HepG2 (cell line): ENCODE measurements at regions of chr19 and their contacts with region 1.

Region 1: GRCh38 chr19:18388100-18388959 is 2.4 kb downstream of the GDF15 start:
- DNase-seq: peak; percentile 52
- ATAC-seq: peak; percentile 21
- H3K4me3 ChIP-seq: peak overlapping the region; percentile 86 to 95 (median 91); a peak in 5 of 6 replicates
- H3K27ac ChIP-seq: peak overlapping the region; percentile 80
- H3K4me1 ChIP-seq: peaks cover 39% of the 10 kb centered on the region
- H3K27me3 ChIP-seq: no peaks in the 10 kb centered on the region; a peak in 1 of 5 replicates
- CTCF ChIP-seq: peak; percentile 95
- EP300 ChIP-seq: peak in 1 of 2 experiments; percentile 11; a peak in 1 of 4 replicates
- POLR2A ChIP-seq: peak; percentile 36 to 53
- RAD21 ChIP-seq: peak; percentile 90

Region 2: DNA sequence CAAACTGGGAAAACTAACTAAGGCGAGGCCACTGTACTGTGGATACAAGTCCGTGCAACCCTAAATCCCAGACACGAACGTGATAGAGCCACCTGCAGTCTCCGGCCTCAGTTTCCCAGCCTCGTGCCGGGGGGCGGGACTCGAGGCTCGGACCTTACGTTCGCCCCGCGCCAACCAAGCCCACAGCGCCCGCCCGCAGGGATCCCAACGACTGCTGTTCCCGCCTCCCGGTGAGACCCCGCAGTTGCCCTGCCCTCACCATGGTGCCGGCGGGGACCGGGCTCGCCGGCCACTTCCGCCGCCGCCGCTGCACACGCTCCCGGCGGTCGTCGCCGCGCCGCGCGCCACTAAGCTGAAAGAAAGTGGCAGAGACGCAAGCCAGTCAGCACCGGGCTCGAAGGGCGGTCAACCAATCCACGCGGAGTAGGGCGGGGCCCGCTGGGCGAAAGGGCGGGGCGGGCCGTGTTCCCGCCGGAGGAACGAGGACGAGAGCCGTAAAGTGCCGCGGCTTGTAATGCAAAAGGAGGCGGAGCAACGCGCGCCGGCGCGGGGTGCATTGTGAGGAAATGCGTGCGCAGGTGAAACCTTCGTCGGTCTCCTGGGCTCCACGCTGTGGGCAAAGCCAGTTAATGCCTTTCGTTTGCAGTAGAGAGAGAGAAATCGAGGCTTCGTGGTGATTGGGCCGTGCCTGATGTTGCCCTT is 65.4 kb before region 1 on chr19 and contains the start of gene LSM4:
- CTCF ChIA-PET with region 1: no interaction called
- POLR2A ChIA-PET with region 1: interaction called, 11 read pairs
- in situ Hi-C with region 1: no loop called
- intact Hi-C with region 1: no loop called
- DNase-seq: peak; percentile 95
- ATAC-seq: peak; percentile 88
- H3K4me3 ChIP-seq: peak within 1 kb of the TSS; percentile 69 to 80 (median 72)
- H3K27ac ChIP-seq: peak within 1 kb of the TSS; percentile 84
- H3K4me1 ChIP-seq: peaks cover 73% of the 10 kb centered on the region
- H3K27me3 ChIP-seq: no peaks in the 10 kb centered on the region
- CTCF ChIP-seq: peak; percentile 59
- EP300 ChIP-seq: no peak
- POLR2A ChIP-seq: peak; percentile 66 to 69
- RAD21 ChIP-seq: peak; percentile 51
- total RNA-seq, gene LSM4: 166 and 188 TPM in 2 replicates

Region 3: GRCh38 chr19:18340190-18340989 is 47.9 kb before region 1 on chr19 and contains the start of gene PGPEP1:
- CTCF ChIA-PET with region 1: no interaction called
- POLR2A ChIA-PET with region 1: interaction called, 28 read pairs
- in situ Hi-C with region 1: no loop called
- intact Hi-C with region 1: loop called (anchors 5 kb)
- DNase-seq: no peak
- ATAC-seq: peak; percentile 46
- H3K4me3 ChIP-seq: peak within 1 kb of the TSS; percentile 76 to 97 (median 89)
- H3K27ac ChIP-seq: peak within 1 kb of the TSS; percentile 88
- H3K4me1 ChIP-seq: peaks cover 67% of the 10 kb centered on the region
- H3K27me3 ChIP-seq: no peaks in the 10 kb centered on the region
- CTCF ChIP-seq: no peak
- EP300 ChIP-seq: no peak; a peak in 1 of 4 replicates
- POLR2A ChIP-seq: peak in 1 of 2 experiments; percentile 67; a peak in 2 of 4 replicates
- RAD21 ChIP-seq: no peak
- total RNA-seq, gene PGPEP1: 56.6 and 57.7 TPM in 2 replicates

Region 4: DNA sequence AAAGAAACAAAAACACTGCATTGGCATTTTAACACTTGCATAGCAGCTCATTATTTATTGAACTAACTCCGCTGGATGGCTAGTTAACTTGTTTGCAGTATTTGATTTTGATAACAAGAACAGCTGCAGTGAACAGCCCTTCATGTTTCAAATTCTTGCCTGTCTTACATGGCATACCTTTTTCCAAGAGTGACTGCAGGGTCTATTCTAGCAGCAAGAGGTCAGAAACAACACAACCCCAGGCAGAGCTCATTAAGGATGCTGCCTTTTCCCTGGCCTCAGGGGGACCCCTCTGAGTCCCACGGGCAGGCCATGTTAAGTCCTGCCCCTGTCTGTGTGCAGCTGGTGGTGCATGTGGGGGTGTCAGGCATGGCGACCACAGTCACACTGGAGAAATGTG is 31.3 kb before region 1 on chr19:
- CTCF ChIA-PET with region 1: interaction called, 5 read pairs
- POLR2A ChIA-PET with region 1: interaction called, 514 read pairs
- in situ Hi-C with region 1: no loop called
- intact Hi-C with region 1: no loop called
- DNase-seq: no peak
- ATAC-seq: peak; percentile 52
- H3K4me3 ChIP-seq: no peak overlapping the region
- H3K27ac ChIP-seq: peak overlapping the region; percentile 32
- H3K4me1 ChIP-seq: peaks cover 32% of the 10 kb centered on the region
- H3K27me3 ChIP-seq: no peaks in the 10 kb centered on the region; a peak in 1 of 5 replicates
- CTCF ChIP-seq: no peak
- EP300 ChIP-seq: no peak
- POLR2A ChIP-seq: no peak
- RAD21 ChIP-seq: no peak

Region 5: GRCh38 chr19:18401580-18402112 is 13.3 kb after region 1 on chr19:
- CTCF ChIA-PET with region 1: no interaction called
- POLR2A ChIA-PET with region 1: interaction called, 22 read pairs
- in situ Hi-C with region 1: no loop called
- intact Hi-C with region 1: no loop called
- DNase-seq: peak; percentile 76
- ATAC-seq: peak; percentile 76
- H3K4me3 ChIP-seq: peak overlapping the region; percentile 28 to 63 (median 35); a peak in 5 of 6 replicates
- H3K27ac ChIP-seq: no peak overlapping the region
- H3K4me1 ChIP-seq: peaks cover 54% of the 10 kb centered on the region
- H3K27me3 ChIP-seq: peaks cover 0 to 17% of the 10 kb centered on the region in 2 experiments; a peak in 4 of 5 replicates
- CTCF ChIP-seq: peak; percentile 63
- EP300 ChIP-seq: 0 out of 4 replicates have a peak, but pooled peaks of 1 of the 2 experiments have one; percentile 14
- POLR2A ChIP-seq: no peak
- RAD21 ChIP-seq: 0 out of 2 replicates have a peak, but pooled peaks have one; percentile 28

Region 6: GRCh38 chr19:18419195-18419698 is 30.9 kb after region 1 on chr19 and contains the start of gene SSBP4:
- CTCF ChIA-PET with region 1: no interaction called
- POLR2A ChIA-PET with region 1: interaction called, 25 read pairs
- in situ Hi-C with region 1: no loop called
- intact Hi-C with region 1: no loop called
- DNase-seq: peak; percentile 66
- ATAC-seq: peak; percentile 23
- H3K4me3 ChIP-seq: peak within 1 kb of the TSS; percentile 60 to 78 (median 76); a peak in 5 of 6 replicates
- H3K27ac ChIP-seq: peak within 1 kb of the TSS; percentile 64
- H3K4me1 ChIP-seq: peaks cover 65% of the 10 kb centered on the region
- H3K27me3 ChIP-seq: no peaks in the 10 kb centered on the region
- CTCF ChIP-seq: peak; percentile 34; the same call in 1 of the 2 replicates
- EP300 ChIP-seq: peak in 1 of 2 experiments; percentile 87; a peak in 2 of 4 replicates
- POLR2A ChIP-seq: no peak
- RAD21 ChIP-seq: peak; percentile 88
- total RNA-seq, gene SSBP4: 19.3 and 39.5 TPM in 2 replicates